KBM-7 (cell line): ENCODE measurements at regions of chr10 and their contacts with region 1.

Region 1: GRCh38 chr10:120942806-120943413 is 91.7 kb downstream of the WDR11 start:
- DNase-seq: peak; percentile 82

Region 2: DNA sequence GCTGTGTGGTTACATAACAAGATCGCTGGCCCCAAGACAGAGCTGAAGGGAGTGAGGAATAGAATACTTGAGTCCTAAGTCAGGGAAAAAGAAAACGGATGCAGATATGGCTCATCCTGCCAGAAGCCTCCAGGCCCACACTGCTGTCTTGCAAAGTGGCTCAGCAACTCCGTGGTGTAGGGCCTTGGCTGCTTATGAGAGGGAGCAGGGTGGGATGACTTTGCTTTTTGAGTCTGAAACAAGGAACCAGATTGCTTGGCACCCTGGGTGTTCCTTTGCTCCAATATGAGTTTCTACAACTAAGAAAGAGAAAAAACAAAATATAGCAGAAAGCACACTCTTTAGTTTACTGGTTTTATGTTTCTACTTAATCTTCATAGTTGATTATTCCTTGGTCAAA is 285.5 kb before region 1 on chr10:
- in situ Hi-C with region 1: no loop called
- DNase-seq: no peak

Region 3: DNA sequence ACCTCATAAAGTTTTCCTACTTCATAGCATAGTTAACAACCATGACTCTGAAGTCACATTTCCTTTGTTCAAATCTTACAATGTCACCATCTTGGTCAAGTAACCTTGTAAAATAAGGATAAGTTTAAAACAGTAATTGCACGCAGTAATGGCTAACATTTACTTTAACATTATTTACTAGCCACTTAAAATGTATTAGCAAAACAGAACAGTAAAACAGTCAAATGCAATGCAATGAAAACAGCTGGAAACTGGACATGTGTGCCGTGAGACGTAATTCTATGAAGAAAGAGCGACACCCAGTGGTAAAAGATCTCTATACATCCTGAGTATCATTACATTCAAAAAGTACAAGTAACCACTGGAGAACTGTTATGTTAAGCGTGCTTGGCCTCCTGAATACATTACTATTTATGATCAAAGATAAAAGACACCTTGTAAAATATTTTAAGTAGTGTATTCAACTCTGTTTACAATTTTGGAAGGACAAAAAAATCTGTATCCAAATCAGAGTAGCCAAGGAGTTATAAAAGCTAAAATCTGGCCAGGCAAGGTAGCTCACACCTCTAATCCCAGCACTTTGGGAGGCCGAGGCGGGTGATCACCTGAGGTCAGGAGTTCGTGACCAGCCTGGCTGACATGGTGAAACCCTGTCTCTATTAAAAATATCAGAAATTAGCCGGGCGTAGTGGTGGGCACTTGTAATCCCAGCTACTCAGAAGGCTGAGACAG is 957.7 kb after region 1 on chr10:
- in situ Hi-C with region 1: loop called (anchors 25 kb)
- DNase-seq: peak; percentile 78